ENCODE measurements at regions of chr2 and their contacts with region 1.

Region 1: GRCh38 chr2:227317834-227318233 is 7.2 kb upstream of the MFF start:
- DNase-seq: no peak
- ATAC-seq: no peak
- H3K4me3 ChIP-seq: no peak overlapping the region
- H3K27ac ChIP-seq: no peak overlapping the region
- H3K4me1 ChIP-seq: no peaks in the 10 kb centered on the region
- H3K27me3 ChIP-seq: no peaks in the 10 kb centered on the region
- CTCF ChIP-seq: no peak
- POLR2A ChIP-seq: no peak
- RAD21 ChIP-seq: no peak

Region 2: DNA sequence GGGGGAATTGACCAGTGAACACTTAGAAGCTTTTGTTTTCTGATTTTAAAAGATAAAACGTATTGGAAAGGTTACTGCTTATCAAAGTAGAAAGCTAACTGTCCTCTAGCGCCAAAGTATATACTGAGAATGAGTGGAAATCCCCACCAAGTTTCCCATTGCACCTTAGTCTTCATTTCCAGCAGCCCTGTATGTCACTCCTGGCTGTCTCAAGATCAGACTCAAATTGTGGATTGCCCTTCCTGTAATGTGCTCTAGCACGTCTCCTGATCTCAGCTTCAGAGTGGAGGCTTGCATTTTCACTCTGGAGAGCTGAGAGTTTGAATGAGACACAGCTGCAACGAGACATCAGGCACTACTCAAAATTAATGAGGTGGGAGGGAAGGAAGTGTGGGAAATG is 33.8 kb after region 1 on chr2:
- CTCF ChIA-PET with region 1: no interaction called
- POLR2A ChIA-PET with region 1: no interaction called
- dilution Hi-C with region 1: no loop called
- in situ Hi-C with region 1: no loop called
- intact Hi-C with region 1: no loop called
- DNase-seq: no peak
- ATAC-seq: no peak
- H3K4me3 ChIP-seq: no peak overlapping the region
- H3K27ac ChIP-seq: no peak overlapping the region
- H3K4me1 ChIP-seq: peaks cover 2% of the 10 kb centered on the region; the same call in 1 of the 2 replicates
- H3K27me3 ChIP-seq: no peaks in the 10 kb centered on the region
- CTCF ChIP-seq: no peak
- POLR2A ChIP-seq: no peak
- RAD21 ChIP-seq: no peak

Region 3: DNA sequence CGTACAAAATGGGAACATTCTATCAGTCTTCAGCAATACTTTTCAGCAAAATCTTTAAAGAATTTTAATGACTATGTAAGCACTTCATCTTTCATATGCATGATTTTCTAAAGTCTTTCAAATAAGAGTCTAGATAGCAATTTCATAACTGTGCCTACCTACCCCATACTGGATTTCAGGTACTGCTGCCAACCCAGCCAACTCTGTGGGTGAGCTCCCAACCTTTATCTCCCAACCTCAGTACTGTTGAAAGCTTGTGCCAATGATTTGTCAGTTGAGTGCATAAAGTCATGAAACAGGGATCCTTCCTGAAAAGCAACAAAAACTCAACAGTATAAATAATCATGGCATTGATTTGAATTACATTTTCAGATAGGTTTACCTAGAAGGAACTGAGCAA is 1656.3 kb after region 1 on chr2:
- CTCF ChIA-PET with region 1: no interaction called
- POLR2A ChIA-PET with region 1: no interaction called
- dilution Hi-C with region 1: no loop called
- in situ Hi-C with region 1: no loop called
- intact Hi-C with region 1: loop called (anchors 5 kb)
- DNase-seq: no peak
- ATAC-seq: no peak
- H3K4me3 ChIP-seq: no peak overlapping the region
- H3K27ac ChIP-seq: no peak overlapping the region
- H3K4me1 ChIP-seq: no peaks in the 10 kb centered on the region
- H3K27me3 ChIP-seq: no peaks in the 10 kb centered on the region
- CTCF ChIP-seq: no peak
- POLR2A ChIP-seq: no peak
- RAD21 ChIP-seq: no peak